Activated naive CD8-positive, alpha-beta T cell treated with anti-CD3 and anti-CD28 coated beads, Interleukin-2, amount 10 ng/mL, durations not matched to agents 7 days and 5 days (primary cell): ENCODE measurements at regions of chr19 and their contacts with region 1.

Region 1: DNA sequence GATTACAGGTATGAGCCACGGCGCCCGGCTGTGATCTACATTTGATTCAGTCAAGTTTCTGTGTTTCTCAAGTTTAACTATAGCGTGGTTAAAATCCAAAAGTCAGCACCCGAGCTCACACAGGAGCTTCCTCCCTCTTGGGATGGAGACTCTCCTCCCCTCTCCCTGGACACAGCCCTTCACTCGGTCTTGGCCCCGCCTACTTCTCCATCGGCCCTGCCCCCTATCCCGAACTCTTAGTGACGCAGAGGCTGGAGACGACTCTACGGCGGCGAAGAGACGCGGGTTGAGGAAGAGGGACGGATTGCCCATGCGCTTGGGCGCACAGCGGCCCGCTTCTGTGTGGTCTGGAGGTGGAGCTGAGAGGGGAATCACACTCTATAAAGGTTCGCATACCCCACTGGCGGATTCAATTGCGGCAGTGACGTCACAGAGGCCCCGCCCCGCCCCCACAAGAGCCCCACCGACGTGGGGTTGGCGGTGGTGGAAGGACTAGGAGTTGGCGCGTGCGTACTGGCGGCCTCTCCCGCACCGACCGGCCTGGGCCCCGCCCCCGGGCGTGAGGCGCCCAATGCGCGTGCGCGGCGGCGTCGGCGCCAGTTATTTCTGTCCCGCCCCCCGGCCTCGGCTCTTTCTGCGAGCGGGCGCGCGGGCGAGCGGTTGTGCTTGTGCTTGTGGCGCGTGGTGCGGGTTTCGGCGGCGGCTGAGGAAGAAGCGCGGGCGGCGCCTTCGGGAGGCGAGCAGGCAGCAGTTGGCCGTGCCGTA is at the start of gene TRIM28:
- DNase-seq: peak; percentile 100
- ATAC-seq: peak; percentile 96
- H3K4me3 Mint-ChIP-seq: peak within 1 kb of the TSS; percentile 98
- H3K27ac Mint-ChIP-seq: peak within 1 kb of the TSS; percentile 98
- H3K4me1 Mint-ChIP-seq: peaks cover 28% of the 10 kb centered on the region
- H3K27me3 Mint-ChIP-seq: peaks cover 20% of the 10 kb centered on the region
- total RNA-seq, gene TRIM28: 409 to 412 TPM

Region 2: GRCh38 chr19:58346961-58347931 is 196.8 kb before region 1 on chr19:
- POLR2A ChIA-PET with region 1: no interaction called
- DNase-seq: peak; percentile 83
- ATAC-seq: peak; percentile 87
- H3K4me3 Mint-ChIP-seq: peak overlapping the region; percentile 98
- H3K27ac Mint-ChIP-seq: peak overlapping the region; percentile 92
- H3K4me1 Mint-ChIP-seq: peaks cover 22% of the 10 kb centered on the region
- H3K27me3 Mint-ChIP-seq: no peaks in the 10 kb centered on the region

Region 3: DNA sequence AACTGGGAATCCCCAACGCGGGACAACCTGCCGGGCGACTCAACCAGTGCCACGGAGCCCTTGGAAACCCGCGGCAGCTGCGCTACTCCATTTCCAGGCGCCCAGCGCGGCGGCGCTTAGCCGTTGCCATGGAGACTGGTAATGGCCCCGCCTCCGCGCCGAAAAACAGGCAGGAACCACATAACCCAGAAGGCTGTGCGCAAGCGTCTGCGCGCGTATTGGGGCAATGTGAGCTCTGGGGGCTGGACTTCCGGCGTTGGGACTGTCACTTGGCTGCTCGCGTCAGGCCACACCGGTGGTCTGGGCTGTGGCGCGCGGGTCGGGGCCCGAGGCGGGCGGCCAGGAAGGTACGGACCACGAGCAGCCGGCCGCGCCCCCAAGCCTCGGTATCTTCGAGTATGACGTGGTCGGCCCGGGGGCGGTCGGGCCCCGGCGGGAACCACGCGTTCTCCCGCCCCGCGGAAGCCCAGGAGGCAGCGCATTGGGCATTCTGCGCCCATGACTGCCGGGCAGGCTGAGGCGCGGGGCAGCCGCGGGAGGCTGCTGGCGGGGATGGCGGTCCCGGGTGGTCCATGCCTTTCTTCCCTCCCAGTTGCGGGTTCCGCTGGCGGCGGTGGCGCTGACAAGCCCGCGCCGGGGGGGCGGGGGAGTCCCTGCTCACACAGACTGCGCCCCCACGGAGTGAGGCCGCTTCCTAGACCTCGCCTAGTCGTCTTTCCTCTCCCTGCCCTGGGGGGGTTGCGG is 92.5 kb before region 1 on chr19 and contains the start of gene ZNF324B:
- POLR2A ChIA-PET with region 1: no interaction called
- DNase-seq: peak; percentile 95
- ATAC-seq: peak; percentile 97
- H3K4me3 Mint-ChIP-seq: peak within 1 kb of the TSS; percentile 87
- H3K27ac Mint-ChIP-seq: peak within 1 kb of the TSS; percentile 22
- H3K4me1 Mint-ChIP-seq: peaks cover 12% of the 10 kb centered on the region
- H3K27me3 Mint-ChIP-seq: peaks cover 6% of the 10 kb centered on the region
- total RNA-seq, gene ZNF324B: 11.6 to 13.9 TPM

Region 4: DNA sequence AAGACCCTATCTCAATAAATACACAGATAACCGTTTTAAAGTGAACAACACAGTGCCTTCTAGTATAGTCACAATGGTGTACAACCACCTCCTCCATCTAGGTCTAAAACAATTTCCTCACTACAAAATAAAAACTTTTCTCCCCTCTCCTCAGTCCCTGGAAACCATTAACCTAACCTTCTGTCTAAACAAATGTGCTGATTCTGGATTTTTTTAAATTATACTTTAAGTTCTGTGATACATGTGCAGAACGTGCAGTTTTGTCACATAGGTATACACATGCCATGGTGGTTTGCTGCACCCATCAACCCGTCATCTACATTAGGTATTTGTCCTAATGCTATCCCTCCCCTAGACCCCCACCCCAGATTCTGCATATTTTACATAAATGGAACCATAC is 14.6 kb before region 1 on chr19:
- POLR2A ChIA-PET with region 1: no interaction called
- DNase-seq: no peak
- ATAC-seq: no peak
- H3K4me3 Mint-ChIP-seq: no peak overlapping the region
- H3K27ac Mint-ChIP-seq: no peak overlapping the region
- H3K4me1 Mint-ChIP-seq: no peaks in the 10 kb centered on the region
- H3K27me3 Mint-ChIP-seq: peaks cover 2% of the 10 kb centered on the region

Region 5: DNA sequence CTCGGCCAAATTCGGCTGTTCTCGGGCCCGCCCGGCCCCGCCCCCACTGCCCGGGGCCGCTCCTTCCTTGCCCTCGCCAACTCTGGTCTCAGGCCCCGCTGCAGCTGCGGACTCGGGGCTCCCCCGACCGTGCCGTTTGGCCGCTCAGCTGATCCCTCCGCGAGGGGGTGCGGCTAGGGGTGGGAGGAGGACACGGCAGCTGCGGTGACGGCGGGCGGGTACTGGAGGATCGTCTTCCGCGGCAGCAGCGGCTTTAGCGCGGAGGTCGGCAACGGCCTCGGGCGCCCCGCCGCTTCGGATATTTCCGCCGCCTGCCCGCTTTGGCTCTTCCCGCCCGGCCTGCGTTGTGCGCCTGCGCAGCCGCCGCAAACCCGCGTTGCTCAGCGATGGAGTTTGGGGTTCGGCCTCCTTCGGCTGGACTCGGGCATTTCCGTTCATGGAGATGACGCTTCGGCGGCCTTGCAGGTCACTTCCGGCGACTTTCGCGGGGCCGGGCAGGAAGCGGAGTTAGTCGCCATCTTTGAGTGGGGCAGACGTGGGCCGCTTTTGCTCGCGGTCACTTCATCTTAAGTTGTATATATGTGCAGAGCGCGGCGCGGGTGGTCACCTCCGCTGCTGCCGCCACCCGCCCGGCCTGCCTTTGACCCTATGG is 14.7 kb after region 1 on chr19:
- POLR2A ChIA-PET with region 1: interaction called, 72 read pairs
- DNase-seq: peak; percentile 100
- ATAC-seq: peak; percentile 65
- H3K4me3 Mint-ChIP-seq: peak overlapping the region; percentile 96
- H3K27ac Mint-ChIP-seq: peak overlapping the region; percentile 96
- H3K4me1 Mint-ChIP-seq: peaks cover 41% of the 10 kb centered on the region
- H3K27me3 Mint-ChIP-seq: no peaks in the 10 kb centered on the region